ENCODE measurements at regions of chr4 and their contacts with region 1.

Region 1: DNA sequence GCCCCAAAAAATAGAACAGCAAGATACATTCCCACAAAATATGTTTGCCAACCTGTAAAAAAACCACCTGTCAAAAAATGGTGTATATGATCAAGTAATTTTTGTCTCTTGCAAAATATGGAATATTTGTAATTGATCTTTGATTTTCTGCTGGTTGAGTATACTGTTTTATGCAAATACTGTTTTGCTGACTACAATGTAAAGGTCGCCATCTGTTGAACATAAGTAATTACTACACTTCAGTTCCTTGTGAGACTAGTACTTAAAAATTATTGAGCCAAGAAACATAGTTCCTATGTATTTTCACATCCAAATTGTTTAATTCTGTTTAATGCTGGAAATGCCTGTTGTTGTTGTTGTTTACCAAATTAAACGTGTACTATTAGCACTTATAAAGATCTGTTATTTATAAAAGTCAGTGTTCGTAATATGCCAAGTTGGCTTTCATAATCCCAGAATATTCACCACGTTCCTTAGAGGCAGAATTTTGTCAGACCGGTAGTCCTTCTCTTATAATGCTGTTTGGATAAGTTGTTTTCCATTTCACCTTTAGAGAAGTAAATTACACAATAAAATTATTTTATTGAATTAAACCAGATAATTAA is 144.2 kb downstream of the PDLIM5 start:
- DNase-seq: no peak
- H3K4me3 ChIP-seq: no peak overlapping the region
- H3K27ac ChIP-seq: no peak overlapping the region
- H3K4me1 ChIP-seq: no peaks in the 10 kb centered on the region
- H3K27me3 ChIP-seq: no peaks in the 10 kb centered on the region
- CTCF ChIP-seq: peak; percentile 10 to 51 (median 31)
- POLR2A ChIP-seq: no peak

Region 2: GRCh38 chr4:94406668-94407437 is 189.1 kb before region 1 on chr4:
- intact Hi-C with region 1: loop called (anchors 10 kb)
- DNase-seq: peak; percentile 93
- H3K4me3 ChIP-seq: no peak overlapping the region
- H3K27ac ChIP-seq: no peak overlapping the region
- H3K4me1 ChIP-seq: no peaks in the 10 kb centered on the region
- H3K27me3 ChIP-seq: no peaks in the 10 kb centered on the region
- CTCF ChIP-seq: peak; percentile 46 to 87 (median 51)
- POLR2A ChIP-seq: no peak

Region 3: GRCh38 chr4:94766856-94767255 is 170.9 kb after region 1 on chr4:
- intact Hi-C with region 1: no loop called
- DNase-seq: no peak
- H3K4me3 ChIP-seq: no peak overlapping the region
- H3K27ac ChIP-seq: no peak overlapping the region
- H3K4me1 ChIP-seq: peaks cover 7% of the 10 kb centered on the region
- H3K27me3 ChIP-seq: no peaks in the 10 kb centered on the region
- CTCF ChIP-seq: no peak
- POLR2A ChIP-seq: no peak

Measured in testis (tissue), 5 donors.